ENCODE measurements at regions of chr16 and their contacts with region 1.

Region 1: DNA sequence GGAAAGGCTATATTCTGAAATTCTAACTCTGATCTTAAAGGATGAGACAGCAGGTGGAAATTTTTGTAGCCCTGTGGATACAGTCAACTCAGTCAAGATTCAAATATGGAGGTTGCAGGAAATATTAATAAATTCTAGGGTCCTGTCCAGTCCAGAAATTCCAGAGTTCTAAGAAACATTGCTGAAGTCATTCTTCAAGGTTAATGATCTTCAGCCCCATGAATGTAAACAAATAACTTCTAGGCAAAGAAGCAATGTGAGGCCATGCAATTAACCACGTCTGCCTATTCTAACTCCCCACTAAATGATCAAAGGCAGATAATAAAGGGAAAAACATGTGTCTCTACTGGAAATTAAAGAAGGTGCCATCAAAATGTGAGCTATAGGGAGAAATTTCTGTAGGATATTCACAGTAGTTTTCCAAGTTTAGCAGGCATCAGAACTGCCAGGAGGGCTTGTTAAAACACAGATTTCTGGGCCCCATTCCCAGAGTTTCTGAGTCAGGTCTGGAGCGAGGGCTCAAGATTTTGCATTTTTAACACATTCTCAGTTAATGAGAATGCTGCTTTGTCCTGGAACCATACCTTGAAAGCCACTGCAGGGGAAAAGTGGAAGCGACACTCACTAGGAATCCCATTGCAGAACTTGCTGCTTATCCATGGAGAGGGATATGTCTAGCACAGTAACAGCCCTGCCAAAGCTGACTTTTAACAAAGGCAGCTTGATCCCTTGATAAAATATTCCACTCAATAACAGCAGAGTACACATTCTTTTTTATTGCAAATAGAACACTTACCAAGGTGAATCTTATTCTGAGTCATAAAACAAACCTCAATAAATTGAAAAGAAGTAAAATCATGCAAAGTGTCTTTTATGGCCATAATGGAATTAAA is 61.8 kb downstream of the DNAH3 start:
- DNase-seq: no peak
- H3K27ac ChIP-seq: no peak overlapping the region
- CTCF ChIP-seq: no peak

Region 2: GRCh38 chr16:20806168-20807050 is 282.5 kb before region 1 on chr16 and contains the starts of genes ERI2 and REXO5:
- CTCF ChIA-PET with region 1: no interaction called
- POLR2A ChIA-PET with region 1: interaction called, 13 read pairs
- DNase-seq: peak; percentile 90
- H3K27ac ChIP-seq: peak within 1 kb of the TSS; percentile 98
- CTCF ChIP-seq: peak; percentile 55

Region 3: DNA sequence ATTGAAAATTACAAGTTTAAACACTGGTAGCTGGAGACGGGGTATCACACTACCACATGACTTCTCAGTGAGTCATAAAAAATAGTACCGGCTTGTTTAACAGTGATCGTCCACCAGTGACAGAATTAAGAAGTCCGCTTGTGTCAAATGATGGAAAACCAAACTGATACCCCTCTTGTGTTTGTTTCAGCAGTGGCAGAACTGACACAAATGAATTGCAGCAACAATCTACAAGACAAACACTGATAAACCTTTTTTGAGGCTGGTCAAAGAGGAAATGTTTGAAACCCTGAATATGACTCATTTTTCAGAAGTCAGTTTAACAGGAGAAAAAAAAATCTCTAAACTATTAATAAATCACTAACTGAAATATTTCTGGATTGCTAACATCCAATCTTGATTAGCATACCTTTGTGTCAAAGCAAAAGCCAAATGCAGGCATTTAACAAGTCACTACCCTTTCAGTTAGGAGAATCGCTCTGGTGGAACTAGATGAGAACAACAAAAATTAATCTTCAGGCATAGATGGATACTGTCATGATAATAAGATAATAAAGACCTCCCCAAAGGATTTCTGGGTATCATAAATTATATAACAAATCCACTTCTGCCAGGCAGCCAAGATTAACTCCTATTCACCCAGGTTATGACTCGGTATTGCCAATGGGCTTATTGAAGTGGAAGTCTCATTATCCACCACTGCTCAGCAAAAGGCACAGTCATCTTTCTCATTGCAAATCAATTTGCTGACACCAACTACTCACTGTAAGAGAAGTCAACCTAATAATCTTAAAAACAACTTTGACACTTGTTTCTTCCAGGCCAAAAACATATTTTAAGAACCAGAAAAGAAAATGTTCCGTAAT is 209.5 kb before region 1 on chr16:
- CTCF ChIA-PET with region 1: no interaction called
- POLR2A ChIA-PET with region 1: no interaction called
- DNase-seq: peak; percentile 64
- H3K27ac ChIP-seq: peak overlapping the region; percentile 72
- CTCF ChIP-seq: no peak

Region 4: DNA sequence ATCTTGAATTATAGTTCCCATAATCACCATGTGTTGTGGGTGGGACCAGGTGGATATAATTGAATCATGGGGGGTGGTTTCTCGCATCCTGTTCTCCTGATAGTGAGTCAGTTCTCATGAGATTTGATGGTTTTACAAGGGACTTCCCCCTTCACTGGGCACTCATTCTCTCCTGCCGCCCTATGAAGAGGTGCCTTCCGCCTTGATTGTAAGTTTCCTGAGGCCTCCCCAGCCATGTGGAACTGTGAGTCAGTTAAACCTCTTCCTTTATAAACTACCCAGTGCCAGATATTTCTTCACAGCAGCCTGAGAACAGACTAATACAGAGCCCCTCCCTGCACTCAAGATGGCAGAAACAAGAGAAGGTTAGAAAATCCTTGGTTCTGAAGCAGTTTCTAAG is 95.9 kb after region 1 on chr16:
- CTCF ChIA-PET with region 1: no interaction called
- POLR2A ChIA-PET with region 1: no interaction called
- DNase-seq: no peak
- H3K27ac ChIP-seq: no peak overlapping the region
- CTCF ChIP-seq: no peak

Region 5: GRCh38 chr16:21314339-21314738 is 225.4 kb after region 1 on chr16:
- CTCF ChIA-PET with region 1: no interaction called
- POLR2A ChIA-PET with region 1: no interaction called
- DNase-seq: no peak
- H3K27ac ChIP-seq: no peak overlapping the region
- CTCF ChIP-seq: no peak

Measured in RWPE1 (cell line).